Transverse colon (tissue), 4 donors: ENCODE measurements at regions of chr20 and their contacts with region 1.

Region 1: GRCh38 chr20:56171087-56172012 is 77.2 kb upstream of the MC3R start:
- DNase-seq: no peak
- H3K4me3 ChIP-seq: no peak overlapping the region
- H3K27ac ChIP-seq: no peak overlapping the region
- H3K4me1 ChIP-seq: no peaks in the 10 kb centered on the region
- H3K27me3 ChIP-seq: no peaks in the 10 kb centered on the region
- CTCF ChIP-seq: peak; percentile 17 to 50 (median 31)
- EP300 ChIP-seq: no peak
- POLR2A ChIP-seq: no peak

Region 2: GRCh38 chr20:55415567-55416142 is 755.7 kb before region 1 on chr20:
- in situ Hi-C with region 1: loop called in 3 of 4 experiments (anchors 25 kb)
- intact Hi-C with region 1: no loop called
- DNase-seq: no peak
- H3K4me3 ChIP-seq: no peak overlapping the region
- H3K27ac ChIP-seq: no peak overlapping the region
- H3K4me1 ChIP-seq: peaks cover 0 to 9% (median 2%) of the 10 kb centered on the region in 4 donors
- H3K27me3 ChIP-seq: no peaks in the 10 kb centered on the region
- CTCF ChIP-seq: peak; percentile 17 to 41 (median 30)
- EP300 ChIP-seq: no peak
- POLR2A ChIP-seq: no peak

Region 3: DNA sequence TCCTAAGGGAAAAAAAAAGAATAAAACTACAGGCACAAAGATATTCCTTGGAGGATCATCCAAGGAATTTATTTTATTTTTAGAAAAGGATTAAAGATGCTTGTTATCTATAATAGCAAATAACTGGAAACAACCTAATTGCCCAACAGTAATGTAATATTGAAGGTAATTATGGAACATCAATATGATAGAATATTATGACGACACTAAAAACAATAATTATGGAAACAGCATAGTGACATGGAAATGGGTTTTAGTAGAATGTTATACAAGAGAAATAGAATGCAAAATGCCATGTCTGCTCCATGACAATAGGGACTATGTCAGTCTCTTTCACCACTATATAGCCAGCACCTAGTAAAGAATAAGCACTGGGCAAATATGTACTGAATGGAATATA is 114.2 kb before region 1 on chr20:
- in situ Hi-C with region 1: no loop called
- intact Hi-C with region 1: no loop called
- DNase-seq: no peak
- H3K4me3 ChIP-seq: no peak overlapping the region
- H3K27ac ChIP-seq: no peak overlapping the region
- H3K4me1 ChIP-seq: no peaks in the 10 kb centered on the region
- H3K27me3 ChIP-seq: no peaks in the 10 kb centered on the region
- CTCF ChIP-seq: no peak
- EP300 ChIP-seq: no peak
- POLR2A ChIP-seq: no peak